HepG2 (cell line): ENCODE measurements at regions of chr4 and their contacts with region 1.

Region 1: GRCh38 chr4:76148142-76148865 is at the start of gene NUP54:
- DNase-seq: peak; percentile 91
- ATAC-seq: peak; percentile 98
- H3K4me3 ChIP-seq: peak within 1 kb of the TSS; percentile 86 to 97 (median 87)
- H3K27ac ChIP-seq: peak within 1 kb of the TSS; percentile 91
- H3K4me1 ChIP-seq: peaks cover 25% of the 10 kb centered on the region
- H3K27me3 ChIP-seq: no peaks in the 10 kb centered on the region; a peak in 1 of 5 replicates
- CTCF ChIP-seq: no peak; the same call in 1 of the 2 replicates
- EP300 ChIP-seq: peak; percentile 36 to 42; a peak in 1 of 4 replicates
- POLR2A ChIP-seq: peak; percentile 80 to 92
- RAD21 ChIP-seq: 0 out of 2 replicates have a peak, but pooled peaks have one; percentile 10
- total RNA-seq, gene NUP54: 69.3 and 90.0 TPM in 2 replicates

Region 2: DNA sequence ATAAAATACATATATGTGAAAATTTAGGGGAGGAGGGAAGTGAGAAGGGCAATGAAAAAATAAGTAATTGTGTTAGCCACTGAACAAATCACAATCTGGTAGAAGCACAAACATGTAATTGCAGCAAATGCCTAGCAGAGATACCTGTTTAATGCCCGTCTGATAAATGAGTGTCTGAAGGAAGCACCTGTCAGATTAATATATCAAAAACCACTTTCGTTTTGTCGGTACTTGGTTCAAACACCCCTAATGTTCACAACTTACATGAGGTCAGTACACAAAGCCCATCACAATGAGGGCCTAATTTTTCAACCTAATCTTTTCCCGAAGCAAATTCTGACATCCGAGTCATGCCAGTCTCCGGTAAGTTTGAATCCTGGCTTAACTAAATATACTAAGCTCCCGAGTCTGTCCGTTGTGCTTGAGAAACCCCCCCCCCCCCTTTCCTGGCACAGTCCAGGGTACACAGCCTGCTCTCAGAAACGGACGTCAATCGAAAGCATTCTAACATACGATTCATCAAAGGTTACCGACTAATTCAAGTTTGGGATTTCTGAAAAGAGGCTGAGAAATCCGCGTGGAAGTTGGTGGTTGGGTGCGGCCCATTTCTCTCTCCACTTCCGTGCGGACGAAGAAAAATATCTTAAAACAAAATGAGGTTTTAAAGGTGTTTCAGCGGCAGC is 158.3 kb before region 1 on chr4:
- CTCF ChIA-PET with region 1: no interaction called
- POLR2A ChIA-PET with region 1: interaction called, 4 read pairs
- in situ Hi-C with region 1: no loop called
- intact Hi-C with region 1: loop called (anchors 1 kb)
- DNase-seq: peak; percentile 3
- ATAC-seq: peak; percentile 60
- H3K4me3 ChIP-seq: peak overlapping the region; percentile 78 to 97 (median 87)
- H3K27ac ChIP-seq: peak overlapping the region; percentile 78
- H3K4me1 ChIP-seq: peaks cover 28% of the 10 kb centered on the region
- H3K27me3 ChIP-seq: no peaks in the 10 kb centered on the region
- CTCF ChIP-seq: no peak
- EP300 ChIP-seq: no peak
- POLR2A ChIP-seq: no peak
- RAD21 ChIP-seq: no peak

Region 3: GRCh38 chr4:76401654-76402053 is 253.3 kb after region 1 on chr4:
- CTCF ChIA-PET with region 1: no interaction called
- POLR2A ChIA-PET with region 1: no interaction called
- in situ Hi-C with region 1: no loop called
- intact Hi-C with region 1: no loop called
- DNase-seq: no peak
- ATAC-seq: no peak
- H3K4me3 ChIP-seq: no peak overlapping the region
- H3K27ac ChIP-seq: no peak overlapping the region
- H3K4me1 ChIP-seq: no peaks in the 10 kb centered on the region
- H3K27me3 ChIP-seq: no peaks in the 10 kb centered on the region; a peak in 1 of 5 replicates
- CTCF ChIP-seq: no peak
- EP300 ChIP-seq: no peak
- POLR2A ChIP-seq: no peak
- RAD21 ChIP-seq: no peak